ENCODE measurements at regions of chr18 and their contacts with region 1.

Region 1: DNA sequence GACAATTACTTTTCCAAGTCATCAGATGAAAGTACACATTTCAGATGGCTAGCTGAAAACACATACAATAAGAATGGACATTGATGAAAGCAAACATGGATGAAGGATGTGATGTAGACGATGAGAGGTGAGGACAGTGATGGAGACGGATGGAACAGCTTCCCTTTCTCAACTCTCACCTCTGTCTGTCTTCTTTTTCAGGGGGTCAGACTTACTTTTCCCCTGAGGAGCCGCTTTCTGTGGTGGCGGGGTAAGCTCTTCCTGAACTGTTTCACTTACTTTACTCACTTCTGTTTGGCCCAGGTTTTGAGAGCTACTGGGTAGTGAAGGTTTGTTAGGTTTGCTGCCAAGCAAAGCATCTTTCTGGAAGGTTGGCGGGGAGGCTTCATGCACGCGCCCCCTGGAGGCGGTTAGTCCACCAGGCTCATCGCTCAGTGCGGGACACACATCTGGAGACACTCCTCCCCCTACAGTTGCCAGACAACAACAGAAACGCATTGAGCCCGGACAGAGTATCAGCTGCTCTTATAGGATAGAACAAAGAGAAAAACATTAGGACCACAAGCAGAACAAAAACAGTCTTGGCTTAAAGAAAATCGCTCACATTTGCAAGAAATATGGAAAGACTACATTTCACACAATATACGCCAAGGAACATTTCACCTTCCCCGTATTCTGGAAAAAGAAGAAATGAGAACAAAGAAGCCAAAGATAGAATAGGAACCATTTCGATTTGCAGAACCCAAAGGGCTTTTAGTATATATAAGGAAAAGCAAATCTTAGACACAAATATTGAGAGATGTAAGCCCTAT is 90.5 kb downstream of the MYOM1 start:
- DNase-seq: peak; percentile 90
- H3K4me3 Mint-ChIP-seq: no peak overlapping the region
- H3K27ac Mint-ChIP-seq: no peak overlapping the region
- H3K4me1 Mint-ChIP-seq: peaks cover 13% of the 10 kb centered on the region
- H3K27me3 Mint-ChIP-seq: no peaks in the 10 kb centered on the region

Region 2: DNA sequence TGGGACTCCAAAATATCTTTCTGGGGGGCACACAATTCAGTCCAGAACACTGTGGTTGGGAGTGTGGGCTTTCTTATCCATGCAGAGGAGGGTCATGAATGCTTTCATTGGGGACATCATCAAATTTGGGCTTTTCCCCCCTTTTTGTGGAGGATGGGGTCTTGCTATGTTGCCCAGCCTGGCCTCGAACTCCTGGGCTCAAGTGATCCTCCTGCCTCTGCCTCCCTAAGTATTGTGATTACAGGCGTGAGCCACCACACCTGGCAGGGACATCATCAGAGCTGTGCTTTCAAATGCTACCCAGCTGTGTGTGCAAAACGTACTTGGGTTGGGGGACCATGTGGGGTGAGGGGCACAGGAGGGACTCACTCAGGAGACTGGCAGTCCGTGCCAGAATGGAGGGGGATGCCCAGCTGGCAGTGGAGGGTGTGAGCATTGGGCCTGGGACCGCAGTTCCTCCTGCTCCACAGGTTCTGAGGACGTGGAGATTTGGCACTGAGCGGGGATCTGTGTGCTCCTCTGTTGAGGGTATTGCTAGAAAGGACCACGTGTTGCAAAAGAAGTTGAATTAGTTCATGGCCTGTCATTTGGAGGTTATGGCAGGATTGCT is 258.0 kb before region 1 on chr18:
- CTCF ChIA-PET with region 1: no interaction called
- POLR2A ChIA-PET with region 1: no interaction called
- intact Hi-C with region 1: no loop called
- DNase-seq: no peak
- H3K4me3 Mint-ChIP-seq: no peak overlapping the region
- H3K27ac Mint-ChIP-seq: no peak overlapping the region
- H3K4me1 Mint-ChIP-seq: no peaks in the 10 kb centered on the region
- H3K27me3 Mint-ChIP-seq: no peaks in the 10 kb centered on the region

Region 3: DNA sequence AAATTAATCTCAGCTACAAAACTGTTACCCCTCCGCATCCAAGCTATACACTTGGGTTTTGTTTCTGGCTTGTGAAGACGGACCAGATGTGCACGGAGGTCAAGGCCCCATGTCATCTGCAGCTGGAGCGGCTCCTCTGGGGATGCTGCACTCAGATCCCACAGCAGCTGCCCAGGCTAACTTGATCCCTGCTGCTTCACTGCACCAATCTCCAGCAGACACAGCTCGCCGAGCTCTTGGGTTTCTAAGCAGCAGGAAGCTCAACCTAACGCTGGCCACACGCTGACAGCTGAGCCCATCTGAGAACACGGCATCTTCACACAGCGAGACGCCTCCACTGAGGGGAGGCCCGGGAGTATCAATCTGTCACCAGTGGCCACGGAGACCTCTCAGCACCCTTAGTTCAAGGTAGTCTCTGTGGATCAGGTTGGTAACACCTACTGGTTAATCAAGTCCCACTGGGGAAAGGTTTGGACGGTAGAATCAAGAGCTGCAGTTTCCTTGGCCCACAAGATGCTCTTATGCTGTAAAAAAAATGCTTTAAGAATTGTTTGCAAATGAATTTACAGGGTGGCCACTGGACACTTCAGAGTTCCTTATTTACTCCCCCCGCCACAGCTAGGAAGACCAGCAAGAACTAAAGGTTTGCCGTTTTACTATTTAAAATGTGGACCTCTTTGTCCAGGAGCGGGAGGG is 214.9 kb before region 1 on chr18:
- CTCF ChIA-PET with region 1: interaction called, 11 read pairs
- POLR2A ChIA-PET with region 1: no interaction called
- intact Hi-C with region 1: no loop called
- DNase-seq: no peak
- H3K4me3 Mint-ChIP-seq: no peak overlapping the region
- H3K27ac Mint-ChIP-seq: peak overlapping the region; percentile 28
- H3K4me1 Mint-ChIP-seq: peaks cover 10% of the 10 kb centered on the region
- H3K27me3 Mint-ChIP-seq: no peaks in the 10 kb centered on the region

Region 4: GRCh38 chr18:2948038-2948437 is 181.2 kb before region 1 on chr18:
- CTCF ChIA-PET with region 1: interaction called, 11 read pairs
- POLR2A ChIA-PET with region 1: no interaction called
- intact Hi-C with region 1: no loop called
- DNase-seq: no peak
- H3K4me3 Mint-ChIP-seq: no peak overlapping the region
- H3K27ac Mint-ChIP-seq: no peak overlapping the region
- H3K4me1 Mint-ChIP-seq: peaks cover 54% of the 10 kb centered on the region
- H3K27me3 Mint-ChIP-seq: no peaks in the 10 kb centered on the region

Region 5: GRCh38 chr18:3110034-3110752 is 19.1 kb before region 1 on chr18:
- CTCF ChIA-PET with region 1: interaction called, 20 read pairs
- POLR2A ChIA-PET with region 1: no interaction called
- intact Hi-C with region 1: no loop called
- DNase-seq: no peak
- H3K4me3 Mint-ChIP-seq: no peak overlapping the region
- H3K27ac Mint-ChIP-seq: no peak overlapping the region
- H3K4me1 Mint-ChIP-seq: no peaks in the 10 kb centered on the region
- H3K27me3 Mint-ChIP-seq: no peaks in the 10 kb centered on the region

Region 6: GRCh38 chr18:3151399-3152264 is 22.4 kb after region 1 on chr18:
- CTCF ChIA-PET with region 1: interaction called, 13 read pairs
- POLR2A ChIA-PET with region 1: no interaction called
- intact Hi-C with region 1: no loop called
- DNase-seq: no peak
- H3K4me3 Mint-ChIP-seq: no peak overlapping the region
- H3K27ac Mint-ChIP-seq: no peak overlapping the region
- H3K4me1 Mint-ChIP-seq: peaks cover 6% of the 10 kb centered on the region
- H3K27me3 Mint-ChIP-seq: no peaks in the 10 kb centered on the region